GM12878 (cell line): ENCODE measurements at regions of chr7 and their contacts with region 1.

Region 1: DNA sequence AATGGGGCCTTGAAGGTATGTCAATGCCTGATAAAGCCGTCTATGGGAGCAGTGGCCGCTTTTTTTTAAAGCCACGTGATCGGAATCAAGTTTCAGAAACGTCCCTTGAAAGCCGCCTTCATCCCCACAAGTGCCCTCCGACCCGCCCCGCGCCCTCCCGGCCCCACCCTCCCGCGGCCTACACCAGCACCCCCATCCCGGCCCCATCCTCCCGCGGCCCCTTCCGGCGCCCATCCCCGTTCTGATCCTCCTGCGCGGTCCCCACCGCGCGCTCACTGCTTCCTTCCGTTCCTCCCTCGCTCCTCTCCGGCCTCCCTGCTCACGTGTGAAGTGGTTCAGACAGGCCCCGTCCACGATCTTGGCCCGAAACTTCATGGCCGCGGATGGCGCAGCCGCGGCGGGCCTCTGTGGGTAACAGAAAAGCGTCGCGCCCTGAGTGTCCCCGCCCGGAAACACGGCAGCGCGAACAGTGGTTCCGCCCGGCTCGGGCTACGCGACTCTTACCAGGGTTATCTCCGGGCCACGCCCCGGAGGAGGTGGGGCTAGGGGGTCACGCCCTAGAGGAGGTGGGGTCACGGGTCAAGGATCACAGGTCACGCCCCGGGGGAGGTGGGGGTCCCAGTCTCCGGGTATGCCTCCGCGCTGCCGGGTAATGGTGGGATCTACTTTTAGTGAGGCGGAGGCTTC is at the start of gene HUS1:
- DNase-seq: peak; percentile 68
- ATAC-seq: peak; percentile 99
- H3K4me3 ChIP-seq: peak within 1 kb of the TSS; percentile 73
- H3K27ac ChIP-seq: peak within 1 kb of the TSS; percentile 82
- H3K4me1 ChIP-seq: peaks cover 4% of the 10 kb centered on the region; the same call in 1 of the 2 replicates
- H3K27me3 ChIP-seq: no peaks in the 10 kb centered on the region
- CTCF ChIP-seq: no peak
- EP300 ChIP-seq: no peak
- POLR2A ChIP-seq: peak; percentile 98
- RAD21 ChIP-seq: no peak
- polyA plus RNA-seq, gene HUS1: 26.4 to 35.5 TPM

Region 2: DNA sequence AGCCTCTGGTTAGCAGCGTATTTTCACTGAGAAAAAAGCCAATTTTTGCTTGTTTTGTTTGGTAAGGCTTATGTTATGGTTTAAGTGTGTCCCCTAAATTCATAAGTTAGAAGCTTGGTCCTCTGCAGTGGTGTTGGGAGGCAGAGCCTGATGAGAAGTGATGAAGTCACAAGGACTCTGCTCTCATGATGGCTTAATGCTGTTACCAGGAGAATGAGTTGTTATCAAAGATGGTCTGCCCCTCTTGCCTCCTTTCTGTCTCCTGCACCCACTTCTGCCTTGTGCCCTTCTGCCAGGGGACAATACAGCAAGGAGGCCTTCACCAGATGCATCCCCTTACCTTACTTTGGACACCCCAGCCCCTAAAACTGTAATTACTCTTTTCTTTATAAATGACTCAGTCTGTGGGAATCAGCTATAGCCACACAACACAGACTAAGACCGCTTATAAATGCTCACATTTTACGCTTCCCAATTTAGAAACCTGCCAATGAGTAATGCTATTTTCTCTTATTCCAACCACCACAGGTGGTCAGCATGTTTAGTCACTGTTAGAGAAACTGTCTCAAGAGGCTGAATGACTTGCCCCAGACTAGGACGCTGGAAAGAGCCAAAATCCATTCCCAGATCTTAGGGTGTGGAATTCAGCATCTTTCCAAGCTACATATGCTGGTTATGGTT is 24.9 kb before region 1 on chr7:
- CTCF ChIA-PET with region 1: no interaction called
- POLR2A ChIA-PET with region 1: no interaction called
- RAD21 ChIA-PET with region 1: no interaction called
- SMC1A ChIA-PET with region 1: no interaction called
- in situ Hi-C with region 1: no loop called
- intact Hi-C with region 1: no loop called
- DNase-seq: no peak
- ATAC-seq: peak; percentile 45; the same call in 2 of the 3 replicates
- H3K4me3 ChIP-seq: no peak overlapping the region
- H3K27ac ChIP-seq: no peak overlapping the region
- H3K4me1 ChIP-seq: peaks cover 4% of the 10 kb centered on the region; the same call in 1 of the 2 replicates
- H3K27me3 ChIP-seq: no peaks in the 10 kb centered on the region
- CTCF ChIP-seq: no peak
- EP300 ChIP-seq: no peak
- POLR2A ChIP-seq: no peak
- RAD21 ChIP-seq: no peak

Region 3: DNA sequence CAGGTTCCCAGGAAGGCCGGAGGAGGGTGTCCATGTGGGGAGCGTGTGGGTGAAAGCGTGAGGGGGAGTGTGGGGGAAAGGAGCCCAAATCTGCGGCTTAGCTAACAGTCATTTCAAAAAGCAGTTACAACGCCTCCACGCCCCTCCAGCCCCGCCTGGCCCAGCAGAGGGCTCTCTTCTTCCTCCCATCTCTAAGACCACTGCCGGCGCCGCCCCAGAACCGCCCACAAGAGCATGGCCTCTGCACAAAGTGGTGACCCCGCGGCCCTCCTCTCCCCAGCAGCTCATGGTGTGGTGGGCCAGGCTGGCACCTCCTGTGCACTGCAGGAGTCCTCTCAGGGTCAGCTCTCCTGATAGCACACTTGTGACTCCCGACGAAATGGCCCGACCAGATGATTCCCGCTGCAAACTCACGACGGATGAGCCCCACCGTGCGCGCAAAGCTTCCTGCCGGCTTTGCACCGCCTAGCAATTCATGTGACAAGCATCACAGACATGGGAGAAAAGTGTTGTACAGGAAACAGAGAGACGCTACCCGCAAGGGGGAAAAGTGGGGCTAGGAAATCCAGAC is 12.5 kb after region 1 on chr7:
- CTCF ChIA-PET with region 1: interaction called, 11 read pairs
- POLR2A ChIA-PET with region 1: no interaction called
- RAD21 ChIA-PET with region 1: interaction called, 3 read pairs
- SMC1A ChIA-PET with region 1: interaction called, 5 read pairs
- in situ Hi-C with region 1: no loop called
- intact Hi-C with region 1: no loop called
- DNase-seq: peak; percentile 39
- ATAC-seq: peak; percentile 100
- H3K4me3 ChIP-seq: peak overlapping the region; percentile 67; the same call in 1 of the 2 replicates
- H3K27ac ChIP-seq: no peak overlapping the region
- H3K4me1 ChIP-seq: peaks cover 5% of the 10 kb centered on the region; the same call in 1 of the 2 replicates
- H3K27me3 ChIP-seq: no peaks in the 10 kb centered on the region
- CTCF ChIP-seq: peak; percentile 76 to 91 (median 82)
- EP300 ChIP-seq: no peak
- POLR2A ChIP-seq: peak; percentile 72
- RAD21 ChIP-seq: peak; percentile 80